Left ventricle myocardium inferior (tissue), 1 donor: ENCODE measurements at regions of chr12 and their contacts with region 1.

Region 1: GRCh38 chr12:89542912-89543592 is 17.2 kb upstream of the POC1B start:
- DNase-seq: peak; percentile 29
- H3K4me3 ChIP-seq: no peak overlapping the region
- H3K27ac ChIP-seq: no peak overlapping the region
- H3K4me1 ChIP-seq: peaks cover 32% of the 10 kb centered on the region
- H3K27me3 ChIP-seq: no peaks in the 10 kb centered on the region
- CTCF ChIP-seq: peak; percentile 90

Region 2: DNA sequence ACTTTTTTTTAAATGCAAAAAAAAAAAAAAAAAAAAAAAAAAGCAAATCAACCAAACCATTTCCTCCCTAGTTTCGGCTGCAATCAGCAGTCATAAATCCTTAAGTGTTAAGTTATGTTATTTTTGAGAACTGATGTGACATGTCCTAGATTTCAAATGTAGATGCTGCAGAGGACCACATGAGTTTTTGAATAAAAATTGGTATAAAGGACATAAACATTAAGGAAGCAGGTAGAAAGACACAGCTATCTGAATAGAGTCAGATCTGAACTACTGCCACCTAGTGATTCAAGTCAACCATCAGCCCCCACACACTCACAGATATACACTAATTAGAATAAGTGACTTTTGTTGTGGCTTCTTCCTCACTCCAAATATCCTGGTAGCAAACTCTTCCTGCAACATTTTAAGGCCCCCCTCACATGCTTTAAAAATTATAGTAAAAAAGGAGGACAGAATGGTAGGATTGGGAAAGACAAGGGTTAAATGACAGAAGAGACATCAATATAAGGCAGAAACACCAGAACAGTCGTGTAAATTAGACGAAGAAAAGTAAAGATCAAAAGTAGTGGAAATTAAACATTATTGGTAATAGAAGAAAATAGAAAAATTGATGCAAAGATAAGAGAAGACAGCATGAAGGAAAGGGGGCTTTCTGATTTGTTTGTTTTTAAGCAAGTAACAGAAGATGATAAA is 560.1 kb after region 1 on chr12:
- intact Hi-C with region 1: loop called (anchors 10 kb)
- DNase-seq: no peak
- H3K4me3 ChIP-seq: no peak overlapping the region
- H3K27ac ChIP-seq: no peak overlapping the region
- H3K4me1 ChIP-seq: no peaks in the 10 kb centered on the region
- H3K27me3 ChIP-seq: peaks cover 15% of the 10 kb centered on the region
- CTCF ChIP-seq: peak; percentile 65

Region 3: DNA sequence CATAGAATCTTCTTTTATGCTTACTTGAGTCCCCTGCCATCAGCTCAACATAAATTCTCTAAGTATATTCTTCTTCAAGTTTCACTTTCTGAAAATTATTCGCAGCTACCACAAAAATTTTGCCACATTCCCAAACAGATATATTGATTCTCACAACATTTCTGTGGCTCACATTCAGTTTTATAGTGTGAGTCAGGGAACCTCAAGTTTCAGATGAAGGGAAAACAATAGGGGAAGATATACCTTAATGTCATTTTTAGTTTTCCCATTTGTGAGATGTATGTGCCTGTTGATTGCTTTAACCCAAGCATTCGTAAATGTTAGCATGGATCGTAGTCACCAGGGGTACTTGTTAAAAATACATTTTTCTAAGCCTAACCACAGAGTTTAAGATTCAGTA is 946.1 kb after region 1 on chr12:
- intact Hi-C with region 1: no loop called
- DNase-seq: no peak
- H3K4me3 ChIP-seq: no peak overlapping the region
- H3K27ac ChIP-seq: no peak overlapping the region
- H3K4me1 ChIP-seq: no peaks in the 10 kb centered on the region
- H3K27me3 ChIP-seq: no peaks in the 10 kb centered on the region
- CTCF ChIP-seq: no peak